Heart right ventricle (tissue), 16 donors: ENCODE measurements at regions of chr20 and their contacts with region 1.

Region 1: GRCh38 chr20:4730780-4731179 is 9.1 kb downstream of the PRND start:
- DNase-seq: peak in 1 of 2 donors; percentile 44
- ATAC-seq: peak in 6 of 8 donors; percentile 23 to 73 (median 58)
- H3K4me3 ChIP-seq: no peak overlapping the region
- H3K27ac ChIP-seq: no peak overlapping the region
- H3K4me1 ChIP-seq: peaks cover 0 to 24% (median 18%) of the 10 kb centered on the region in 9 donors
- H3K27me3 ChIP-seq: peaks cover 0 to 16% (median 0%) of the 10 kb centered on the region in 7 donors
- CTCF ChIP-seq: no peak

Region 2: GRCh38 chr20:4234128-4234527 is 496.7 kb before region 1 on chr20:
- intact Hi-C with region 1: loop called in 1 of 10 experiments (anchors 10 kb)
- DNase-seq: no peak
- ATAC-seq: no peak
- H3K4me3 ChIP-seq: no peak overlapping the region
- H3K27ac ChIP-seq: no peak overlapping the region
- H3K4me1 ChIP-seq: no peaks in the 10 kb centered on the region
- H3K27me3 ChIP-seq: no peaks in the 10 kb centered on the region
- CTCF ChIP-seq: no peak

Region 3: GRCh38 chr20:4656491-4656890 is 74.3 kb before region 1 on chr20:
- intact Hi-C with region 1: no loop called
- DNase-seq: no peak
- ATAC-seq: no peak
- H3K4me3 ChIP-seq: no peak overlapping the region
- H3K27ac ChIP-seq: no peak overlapping the region
- H3K4me1 ChIP-seq: peaks cover 0 to 4% (median 0%) of the 10 kb centered on the region in 9 donors
- H3K27me3 ChIP-seq: peaks cover 0 to 10% (median 0%) of the 10 kb centered on the region in 7 donors
- CTCF ChIP-seq: no peak